ENCODE measurements at regions of chr2 and their contacts with region 1.

Region 1: GRCh38 chr2:69946351-69947077 is 14.9 kb downstream of the ASPRV1 start:
- DNase-seq: peak; percentile 92
- H3K4me3 Mint-ChIP-seq: peak overlapping the region; percentile 56
- H3K27ac Mint-ChIP-seq: peak overlapping the region; percentile 90
- H3K4me1 Mint-ChIP-seq: peaks cover 40% of the 10 kb centered on the region
- H3K27me3 Mint-ChIP-seq: no peaks in the 10 kb centered on the region

Region 2: DNA sequence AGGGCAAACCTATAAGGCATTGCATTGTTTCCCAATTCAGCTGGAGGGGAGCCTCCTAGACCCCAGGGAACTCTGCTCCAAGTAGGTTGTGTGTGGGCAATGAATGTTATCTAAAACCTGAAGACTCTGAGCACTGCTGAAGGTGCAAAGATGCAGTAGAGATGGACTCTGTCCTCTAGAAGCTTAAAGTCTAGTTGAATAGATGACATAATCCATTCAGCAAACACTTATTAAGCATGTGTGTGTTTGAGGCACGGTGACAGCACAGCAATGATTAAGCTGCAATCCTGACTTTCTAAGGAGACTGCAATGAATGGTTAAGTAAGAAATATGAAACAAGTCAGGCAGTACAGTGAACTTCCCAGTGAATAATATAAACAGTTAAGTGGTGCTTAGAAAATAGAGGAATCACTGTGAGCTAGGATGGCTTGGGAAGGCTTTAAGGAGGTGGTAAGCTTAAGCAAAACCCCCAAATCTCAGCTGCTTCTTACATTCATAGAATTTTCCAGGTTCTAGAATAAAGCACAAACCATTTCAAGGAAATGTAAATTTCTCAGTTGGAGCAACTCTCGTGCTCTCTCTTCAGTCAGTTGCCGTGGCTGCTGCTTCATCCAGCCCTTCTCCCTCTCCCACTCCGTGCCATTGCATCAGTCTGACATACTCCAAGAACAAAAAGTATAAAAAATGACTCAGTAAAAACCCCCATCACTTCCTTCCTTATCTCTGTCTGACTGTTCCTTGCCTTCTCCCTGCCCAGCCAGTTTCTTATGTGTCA is 12.5 kb before region 1 on chr2:
- intact Hi-C with region 1: loop called (anchors 1 kb)
- DNase-seq: no peak
- H3K4me3 Mint-ChIP-seq: no peak overlapping the region
- H3K27ac Mint-ChIP-seq: peak overlapping the region; percentile 0
- H3K4me1 Mint-ChIP-seq: peaks cover 28% of the 10 kb centered on the region
- H3K27me3 Mint-ChIP-seq: no peaks in the 10 kb centered on the region

Region 3: GRCh38 chr2:70069049-70069448 is 122.5 kb after region 1 on chr2:
- intact Hi-C with region 1: loop called (anchors 1 kb)
- DNase-seq: peak; percentile 94
- H3K4me3 Mint-ChIP-seq: peak overlapping the region; percentile 47
- H3K27ac Mint-ChIP-seq: peak overlapping the region; percentile 91
- H3K4me1 Mint-ChIP-seq: peaks cover 43% of the 10 kb centered on the region
- H3K27me3 Mint-ChIP-seq: no peaks in the 10 kb centered on the region

Region 4: DNA sequence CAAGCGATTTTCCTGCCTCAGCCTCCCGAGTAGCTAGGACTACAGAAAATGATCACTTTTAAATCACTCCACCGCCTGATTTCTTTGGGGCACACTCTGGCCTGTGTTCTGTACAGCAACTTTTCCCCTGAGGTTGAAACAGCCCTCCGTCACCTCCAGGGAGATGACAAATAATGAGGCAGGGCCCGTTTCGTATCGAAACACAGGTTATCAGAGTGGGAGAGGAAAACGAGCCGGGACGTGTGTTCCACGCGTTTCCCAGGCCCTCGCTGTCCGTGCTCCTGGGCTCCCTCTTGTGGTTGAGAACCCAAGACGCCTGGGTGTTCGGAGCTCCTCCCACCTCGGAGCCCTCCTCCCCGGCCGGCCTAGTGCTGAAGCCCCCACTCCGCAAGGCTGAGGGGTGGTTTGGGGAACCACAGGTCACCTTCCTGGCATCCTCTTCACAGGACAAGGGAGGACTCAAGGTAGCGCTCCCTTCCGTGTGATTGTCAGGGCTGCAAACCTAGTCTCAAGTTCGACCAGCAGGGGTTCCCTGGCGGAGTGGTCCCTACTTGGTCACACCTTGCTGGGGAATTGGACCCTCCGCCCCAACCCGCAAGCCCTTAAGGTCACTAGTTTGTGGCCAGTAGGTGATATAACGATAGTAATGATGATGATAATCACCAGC is 1002.0 kb after region 1 on chr2:
- intact Hi-C with region 1: no loop called
- DNase-seq: peak; percentile 93
- H3K4me3 Mint-ChIP-seq: peak overlapping the region; percentile 83
- H3K27ac Mint-ChIP-seq: peak overlapping the region; percentile 58
- H3K4me1 Mint-ChIP-seq: peaks cover 16% of the 10 kb centered on the region
- H3K27me3 Mint-ChIP-seq: peaks cover 23% of the 10 kb centered on the region